Sigmoid colon (tissue), 7 donors: ENCODE measurements at regions of chr2 and their contacts with region 1.

Region 1: GRCh38 chr2:11743846-11744553 is 2.4 kb upstream of the LPIN1 start:
- DNase-seq: peak; percentile 98
- H3K4me3 ChIP-seq: peak overlapping the region in 3 of 4 donors; percentile 15 to 30 (median 28)
- H3K27ac ChIP-seq: peak overlapping the region; percentile 80 to 93 (median 88)
- H3K4me1 ChIP-seq: peaks cover 0 to 49% (median 40%) of the 10 kb centered on the region in 4 donors
- H3K27me3 ChIP-seq: no peaks in the 10 kb centered on the region
- CTCF ChIP-seq: no peak
- EP300 ChIP-seq: peak in 1 of 4 donors; percentile 52
- POLR2A ChIP-seq: no peak

Region 2: GRCh38 chr2:11073251-11073650 is 670.7 kb before region 1 on chr2:
- intact Hi-C with region 1: no loop called
- DNase-seq: no peak
- H3K4me3 ChIP-seq: no peak overlapping the region
- H3K27ac ChIP-seq: no peak overlapping the region
- H3K4me1 ChIP-seq: peaks cover 0 to 7% (median 0%) of the 10 kb centered on the region in 4 donors
- H3K27me3 ChIP-seq: peaks cover 0 to 18% (median 0%) of the 10 kb centered on the region in 3 donors
- CTCF ChIP-seq: no peak
- EP300 ChIP-seq: no peak
- POLR2A ChIP-seq: no peak

Region 3: GRCh38 chr2:11465497-11466406 is 278.2 kb before region 1 on chr2 and contains the start of gene E2F6:
- intact Hi-C with region 1: loop called (anchors 2 kb)
- DNase-seq: peak; percentile 96
- H3K4me3 ChIP-seq: peak within 1 kb of the TSS; percentile 50 to 67 (median 62)
- H3K27ac ChIP-seq: peak within 1 kb of the TSS; percentile 85 to 97 (median 94)
- H3K4me1 ChIP-seq: peaks cover 3 to 51% (median 40%) of the 10 kb centered on the region in 4 donors
- H3K27me3 ChIP-seq: no peaks in the 10 kb centered on the region
- CTCF ChIP-seq: no peak
- EP300 ChIP-seq: peak in 2 of 4 donors; percentile 11 to 27
- POLR2A ChIP-seq: peak; percentile 68 to 77
- total RNA-seq, gene E2F6: 11.8 to 24.2 (median 19.5) TPM

Region 4: DNA sequence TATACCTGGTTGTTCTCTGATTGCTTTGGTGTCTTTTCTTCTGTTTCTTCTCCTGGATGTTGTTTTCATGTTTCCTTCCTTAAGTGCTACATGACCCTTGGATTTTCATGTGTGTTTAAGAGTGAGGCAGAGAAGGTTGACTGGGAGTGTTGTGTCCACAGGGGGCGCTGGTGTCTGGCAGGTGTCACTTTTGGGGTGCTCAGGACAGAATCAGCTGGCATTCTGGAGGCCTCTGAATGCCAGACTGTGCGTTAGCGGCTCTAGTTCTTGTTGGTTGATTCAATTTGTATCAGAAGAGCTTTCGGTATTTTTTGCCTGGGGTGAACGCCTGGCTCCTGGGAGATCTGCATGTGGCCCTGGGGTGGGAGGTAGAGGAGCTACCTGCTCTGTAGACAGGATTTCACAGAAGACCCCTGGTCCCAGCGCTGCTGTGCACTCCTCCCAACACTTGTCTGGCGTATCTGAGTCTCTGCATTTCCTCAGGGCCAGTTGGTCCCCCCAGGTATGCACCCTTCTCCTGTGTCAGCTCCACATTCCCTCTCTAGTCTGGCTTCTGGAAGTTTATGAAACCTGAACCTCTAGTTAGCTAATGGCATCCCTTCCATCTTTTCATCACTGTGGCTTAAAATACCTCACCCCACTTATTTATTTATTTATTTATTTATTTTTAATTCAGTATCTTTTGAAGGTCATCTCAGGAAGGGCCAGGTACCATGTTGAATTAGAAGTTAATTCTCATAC is 209.1 kb before region 1 on chr2:
- intact Hi-C with region 1: no loop called
- DNase-seq: no peak
- H3K4me3 ChIP-seq: no peak overlapping the region
- H3K27ac ChIP-seq: no peak overlapping the region
- H3K4me1 ChIP-seq: peaks cover 0 to 10% (median 2%) of the 10 kb centered on the region in 4 donors
- H3K27me3 ChIP-seq: peaks cover 0 to 27% (median 10%) of the 10 kb centered on the region in 3 donors
- CTCF ChIP-seq: no peak
- EP300 ChIP-seq: no peak
- POLR2A ChIP-seq: no peak

Region 5: DNA sequence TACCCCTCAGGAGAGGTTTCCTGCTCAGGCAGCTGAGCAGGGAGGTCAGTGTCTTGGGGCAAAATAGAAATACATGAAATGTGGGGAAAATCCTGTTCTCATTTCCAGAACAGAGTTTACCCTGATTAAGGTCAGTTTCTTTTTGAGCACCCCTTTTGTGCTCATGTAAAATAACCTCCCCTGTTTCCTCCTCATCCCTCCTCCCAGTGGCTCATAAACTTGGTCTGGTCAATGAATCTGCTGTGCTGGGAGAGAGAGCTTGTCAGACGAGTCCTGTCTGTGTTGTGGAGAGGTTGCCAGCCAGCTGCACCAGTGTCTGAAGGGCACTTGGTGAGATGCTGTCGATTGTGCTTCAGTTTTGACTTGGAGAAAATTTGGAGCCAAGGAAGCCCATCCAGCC is 122.6 kb before region 1 on chr2:
- intact Hi-C with region 1: no loop called
- DNase-seq: no peak
- H3K4me3 ChIP-seq: no peak overlapping the region
- H3K27ac ChIP-seq: no peak overlapping the region
- H3K4me1 ChIP-seq: no peaks in the 10 kb centered on the region
- H3K27me3 ChIP-seq: no peaks in the 10 kb centered on the region
- CTCF ChIP-seq: no peak
- EP300 ChIP-seq: no peak
- POLR2A ChIP-seq: no peak

Region 6: DNA sequence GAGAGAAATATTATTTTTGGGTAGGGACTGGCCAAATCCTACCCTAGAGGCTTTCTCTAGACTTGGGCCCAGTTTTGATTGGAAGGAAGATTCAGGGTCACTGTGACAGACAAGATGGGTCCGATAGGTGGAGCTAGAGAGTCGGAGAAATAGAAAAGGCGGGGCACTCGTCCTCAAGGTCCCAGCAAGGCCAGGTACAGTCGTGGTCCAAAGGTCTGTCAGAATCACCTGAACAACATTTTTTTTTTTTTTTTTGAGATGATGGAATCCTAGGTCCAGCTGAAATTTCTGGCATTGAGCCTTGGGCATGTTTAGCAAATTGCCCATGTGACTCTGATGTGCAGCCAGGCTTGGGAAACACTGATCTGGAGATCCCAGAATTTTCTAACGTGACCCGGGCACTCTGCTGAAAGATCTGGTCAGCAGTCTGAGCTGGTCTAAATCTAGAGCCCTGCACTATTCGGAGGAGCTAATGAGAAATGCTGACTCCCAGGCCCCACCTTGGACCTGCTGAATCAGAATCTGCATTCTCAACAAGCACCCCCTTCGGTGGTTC is 51.0 kb before region 1 on chr2:
- intact Hi-C with region 1: loop called (anchors 1 kb)
- DNase-seq: peak; percentile 78
- H3K4me3 ChIP-seq: no peak overlapping the region
- H3K27ac ChIP-seq: no peak overlapping the region
- H3K4me1 ChIP-seq: peaks cover 0 to 37% (median 30%) of the 10 kb centered on the region in 4 donors
- H3K27me3 ChIP-seq: no peaks in the 10 kb centered on the region
- CTCF ChIP-seq: peak; percentile 31 to 77 (median 64)
- EP300 ChIP-seq: no peak
- POLR2A ChIP-seq: no peak

Region 7: GRCh38 chr2:11778923-11779757 is 35.1 kb after region 1 on chr2:
- intact Hi-C with region 1: loop called (anchors 1 kb)
- DNase-seq: peak; percentile 87
- H3K4me3 ChIP-seq: no peak overlapping the region
- H3K27ac ChIP-seq: no peak overlapping the region
- H3K4me1 ChIP-seq: peaks cover 0 to 33% (median 27%) of the 10 kb centered on the region in 4 donors
- H3K27me3 ChIP-seq: no peaks in the 10 kb centered on the region
- CTCF ChIP-seq: peak; percentile 91 to 98 (median 95)
- EP300 ChIP-seq: no peak
- POLR2A ChIP-seq: no peak